ENCODE measurements at regions of chr2 and their contacts with region 1.

Region 1: GRCh38 chr2:18149645-18150246 is 271.3 kb downstream of the KCNS3 start:
- DNase-seq: no peak
- H3K4me3 ChIP-seq: no peak overlapping the region
- CTCF ChIP-seq: peak; percentile 58

Region 2: GRCh38 chr2:17845806-17846205 is 303.9 kb before region 1 on chr2:
- CTCF ChIA-PET with region 1: interaction called, 76 read pairs
- POLR2A ChIA-PET with region 1: no interaction called
- DNase-seq: no peak
- H3K4me3 ChIP-seq: no peak overlapping the region
- CTCF ChIP-seq: no peak

Region 3: DNA sequence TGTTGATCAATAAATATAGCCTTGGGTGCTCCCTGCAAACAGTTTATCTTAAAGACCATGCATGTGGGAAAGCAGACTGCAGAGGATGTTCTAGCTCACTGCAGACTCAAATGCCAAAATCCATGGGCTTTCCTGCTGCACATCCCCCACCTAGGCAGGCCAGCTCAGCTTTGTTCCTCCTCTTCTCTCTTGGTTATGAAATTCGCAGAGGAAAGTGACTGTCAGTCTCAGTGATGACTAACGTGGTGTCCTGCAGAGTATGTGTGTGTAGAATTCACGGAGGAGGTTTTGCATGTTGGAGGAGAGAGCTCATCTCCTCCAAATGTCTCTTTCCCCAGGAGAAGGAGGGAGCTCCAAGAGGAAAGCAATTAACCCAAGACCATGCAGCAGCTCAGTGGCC is 292.7 kb before region 1 on chr2:
- CTCF ChIA-PET with region 1: interaction called, 76 read pairs
- POLR2A ChIA-PET with region 1: interaction called, 3 read pairs
- DNase-seq: no peak
- H3K4me3 ChIP-seq: no peak overlapping the region
- CTCF ChIP-seq: no peak

Region 4: GRCh38 chr2:18119883-18120282 is 29.9 kb before region 1 on chr2:
- CTCF ChIA-PET with region 1: interaction called, 23 read pairs
- POLR2A ChIA-PET with region 1: no interaction called
- DNase-seq: peak; percentile 24
- H3K4me3 ChIP-seq: no peak overlapping the region
- CTCF ChIP-seq: no peak

Region 5: DNA sequence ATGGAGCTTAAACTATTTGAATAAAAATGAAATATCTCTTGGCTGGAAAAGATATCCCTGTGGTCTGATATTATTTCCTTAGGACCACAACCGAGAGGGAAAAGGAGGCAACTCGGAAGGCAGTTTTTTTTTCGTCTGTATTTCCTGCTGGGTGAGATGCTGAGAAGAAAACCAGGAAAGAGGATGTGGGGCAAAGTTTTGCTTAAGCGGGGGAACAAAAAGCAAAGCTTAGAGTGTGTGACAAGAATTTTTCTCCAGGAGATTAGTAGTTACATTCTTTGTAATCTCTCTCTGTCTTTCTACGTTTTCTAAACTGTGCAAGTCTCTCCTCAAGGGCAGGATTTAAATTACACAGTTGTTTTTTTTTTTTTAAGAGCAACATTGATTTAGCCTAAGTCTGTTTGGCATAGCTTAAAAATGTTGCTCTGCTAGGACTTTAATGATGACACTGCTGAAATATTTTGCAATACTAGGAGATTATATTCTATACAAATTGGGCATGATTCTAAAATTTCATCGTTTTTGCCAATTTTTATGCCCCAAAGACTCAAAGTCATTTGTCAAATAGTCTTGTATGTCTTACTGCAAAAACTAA is 12.8 kb before region 1 on chr2:
- CTCF ChIA-PET with region 1: interaction called, 61 read pairs
- POLR2A ChIA-PET with region 1: no interaction called
- DNase-seq: no peak
- H3K4me3 ChIP-seq: no peak overlapping the region
- CTCF ChIP-seq: no peak

Region 6: GRCh38 chr2:18171191-18172139 is 21.7 kb after region 1 on chr2:
- CTCF ChIA-PET with region 1: interaction called, 11 read pairs
- POLR2A ChIA-PET with region 1: interaction called, 3 read pairs
- DNase-seq: no peak
- H3K4me3 ChIP-seq: no peak overlapping the region
- CTCF ChIP-seq: no peak

Region 7: GRCh38 chr2:18311420-18312195 is 161.9 kb after region 1 on chr2:
- CTCF ChIA-PET with region 1: no interaction called
- POLR2A ChIA-PET with region 1: no interaction called
- DNase-seq: peak; percentile 85
- H3K4me3 ChIP-seq: no peak overlapping the region
- CTCF ChIP-seq: no peak

Region 8: DNA sequence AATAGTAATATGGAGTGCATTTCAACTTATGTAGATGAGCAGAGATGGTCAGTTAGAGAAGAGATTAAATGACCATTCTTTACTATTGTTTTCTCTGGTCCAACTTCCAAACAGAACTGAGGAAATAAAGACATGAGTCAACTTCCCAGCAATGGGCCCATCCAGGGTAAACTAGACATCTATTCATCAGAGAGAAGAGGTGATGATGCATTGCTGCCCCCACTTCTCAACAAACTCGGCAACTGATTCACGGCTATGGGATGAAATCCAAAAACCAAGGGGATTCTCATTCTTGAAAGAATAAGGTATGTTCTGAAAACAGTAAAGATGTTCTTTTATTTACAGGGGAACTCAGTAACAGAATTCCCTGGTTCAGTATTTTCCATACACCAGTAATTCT is 220.0 kb after region 1 on chr2:
- CTCF ChIA-PET with region 1: interaction called, 10 read pairs
- POLR2A ChIA-PET with region 1: no interaction called
- DNase-seq: no peak
- H3K4me3 ChIP-seq: no peak overlapping the region
- CTCF ChIP-seq: no peak